ENCODE measurements at regions of chr12 and their contacts with region 1.

Region 1: DNA sequence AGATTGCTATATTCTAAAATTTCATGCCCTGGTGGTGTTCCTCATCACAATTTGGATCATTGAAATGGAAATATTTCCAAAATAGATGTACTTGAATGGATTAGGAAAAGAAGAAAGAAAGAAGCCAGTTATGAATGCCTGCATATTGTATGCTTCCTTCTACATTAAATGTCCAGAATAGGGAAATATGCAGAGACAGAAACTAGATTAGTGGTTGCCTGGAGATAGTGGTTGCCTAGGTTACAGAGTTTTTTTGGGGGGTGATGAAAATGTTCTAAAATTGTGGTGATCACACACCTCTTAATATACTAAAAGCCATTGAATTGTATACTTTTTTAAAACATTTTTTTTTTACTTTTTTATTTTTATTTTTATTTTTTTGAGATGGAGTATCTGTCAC is 18.0 kb downstream of the TUBA1A start:
- DNase-seq: no peak
- H3K4me3 ChIP-seq: no peak overlapping the region
- H3K27ac ChIP-seq: no peak overlapping the region
- H3K4me1 ChIP-seq: no peaks in the 10 kb centered on the region
- H3K27me3 ChIP-seq: no peaks in the 10 kb centered on the region
- CTCF ChIP-seq: no peak

Region 2: GRCh38 chr12:49100380-49100779 is 70.5 kb before region 1 on chr12:
- intact Hi-C with region 1: loop called (anchors 5 kb)
- DNase-seq: no peak
- H3K4me3 ChIP-seq: no peak overlapping the region
- H3K27ac ChIP-seq: no peak overlapping the region
- H3K4me1 ChIP-seq: peaks cover 0 to 13% (median 4%) of the 10 kb centered on the region in 4 donors
- H3K27me3 ChIP-seq: no peaks in the 10 kb centered on the region
- CTCF ChIP-seq: no peak

Region 3: DNA sequence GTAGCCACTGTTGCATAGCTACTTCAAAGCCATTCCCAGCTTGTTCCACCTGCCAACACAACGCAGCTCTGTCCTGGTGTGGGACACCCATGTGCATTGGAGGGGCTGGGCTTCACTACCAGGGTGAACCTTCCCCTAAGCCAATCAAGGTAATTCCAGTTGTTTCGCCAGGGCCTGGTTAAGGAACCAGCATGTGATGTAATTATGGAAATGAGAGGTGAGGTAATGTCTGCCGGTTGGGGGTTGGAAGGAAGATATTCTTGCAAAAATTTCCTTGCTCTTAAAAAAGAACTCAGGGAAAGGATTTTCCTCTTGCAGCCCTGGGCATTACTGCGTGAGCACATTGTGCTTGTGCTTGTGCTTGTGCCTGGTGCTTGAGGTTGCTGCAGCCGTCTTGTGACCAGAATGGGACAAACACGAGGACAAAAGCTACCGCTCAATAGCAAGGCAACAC is 108.8 kb after region 1 on chr12:
- intact Hi-C with region 1: no loop called
- DNase-seq: no peak
- H3K4me3 ChIP-seq: no peak overlapping the region
- H3K27ac ChIP-seq: no peak overlapping the region
- H3K4me1 ChIP-seq: no peaks in the 10 kb centered on the region
- H3K27me3 ChIP-seq: no peaks in the 10 kb centered on the region
- CTCF ChIP-seq: no peak